OCI-LY7 (cell line): ENCODE measurements at regions of chr10 and their contacts with region 1.

Region 1: DNA sequence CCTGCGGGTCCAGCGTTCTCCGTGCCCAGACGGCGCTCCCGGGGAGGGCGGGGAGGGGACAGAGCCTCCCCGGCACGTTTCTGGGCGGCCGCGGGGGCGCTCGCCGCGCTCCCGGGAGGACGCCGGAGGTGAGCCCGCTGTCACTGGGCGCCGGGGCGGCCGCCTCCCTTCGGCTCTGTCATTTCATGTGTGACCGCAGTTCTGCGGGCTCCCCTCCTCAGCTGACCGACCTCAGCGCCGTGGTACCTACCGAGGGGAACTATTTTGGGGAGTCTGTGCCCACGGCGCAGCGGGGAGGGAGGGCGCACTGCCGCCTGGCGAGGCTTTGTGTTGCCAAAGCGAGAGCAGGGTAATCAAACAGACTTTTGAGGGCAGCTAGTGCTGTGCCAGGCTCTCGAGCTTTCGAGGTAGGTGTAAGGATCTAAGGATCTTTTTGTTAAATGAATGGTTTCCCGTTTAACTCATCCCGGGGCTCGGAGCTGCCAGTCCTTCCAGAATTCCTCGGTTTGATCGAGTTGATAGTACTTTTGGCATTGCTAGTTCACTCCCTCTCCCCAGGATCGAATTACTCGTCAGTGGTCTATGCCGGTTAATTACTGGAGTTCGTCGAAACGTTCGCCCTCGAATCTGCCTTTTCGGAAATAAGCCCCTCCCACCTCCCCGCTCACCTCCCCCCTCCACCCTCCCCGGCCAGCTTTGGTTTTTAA is 1.9 kb downstream of the ARID5B start:
- DNase-seq: peak; percentile 77
- H3K4me3 ChIP-seq: peak overlapping the region; percentile 93
- H3K27ac ChIP-seq: peak overlapping the region; percentile 96
- H3K4me1 ChIP-seq: peaks cover 50% of the 10 kb centered on the region
- CTCF ChIP-seq: peak; percentile 59

Region 2: GRCh38 chr10:61390851-61391250 is 512.5 kb before region 1 on chr10:
- CTCF ChIA-PET with region 1: no interaction called
- POLR2A ChIA-PET with region 1: no interaction called
- intact Hi-C with region 1: no loop called
- DNase-seq: no peak
- H3K4me3 ChIP-seq: no peak overlapping the region
- H3K27ac ChIP-seq: no peak overlapping the region
- H3K4me1 ChIP-seq: no peaks in the 10 kb centered on the region
- CTCF ChIP-seq: no peak

Region 3: DNA sequence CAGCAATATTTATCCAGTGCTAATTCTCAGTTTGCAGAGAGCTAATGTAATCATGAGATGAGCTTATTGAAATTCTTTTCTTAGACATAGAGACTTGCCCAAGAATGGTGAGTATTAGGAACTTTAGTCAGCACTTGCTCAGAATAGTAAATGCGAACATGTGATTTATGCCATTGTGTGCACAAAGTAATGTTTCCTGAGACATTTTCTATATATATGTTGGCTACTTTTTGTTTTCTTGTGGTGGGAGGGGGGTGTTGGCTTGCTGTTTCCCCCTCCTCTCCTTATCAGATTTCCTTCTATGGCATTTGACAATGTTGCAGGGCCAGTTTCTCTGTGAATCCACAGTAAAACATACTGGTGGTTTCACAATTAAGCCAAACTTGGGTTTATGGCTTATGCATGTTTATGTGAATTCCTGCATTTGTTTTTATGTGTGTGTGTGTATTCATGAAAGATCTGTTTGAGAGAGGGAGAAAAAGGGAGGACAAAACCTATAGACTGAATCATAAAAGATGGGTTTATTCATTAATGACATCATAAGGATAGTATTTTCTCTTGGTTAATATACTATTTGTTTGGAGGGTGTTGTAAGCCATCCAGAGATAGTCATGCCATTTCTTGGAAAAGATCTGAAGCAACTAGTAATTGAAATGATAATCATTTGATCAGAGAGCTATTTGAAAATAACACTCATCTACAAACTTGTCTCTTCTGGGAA is 34.4 kb after region 1 on chr10:
- CTCF ChIA-PET with region 1: interaction called, 3 read pairs
- POLR2A ChIA-PET with region 1: interaction called, 38 read pairs
- intact Hi-C with region 1: no loop called
- DNase-seq: no peak
- H3K4me3 ChIP-seq: no peak overlapping the region
- H3K27ac ChIP-seq: no peak overlapping the region
- H3K4me1 ChIP-seq: peaks cover 70% of the 10 kb centered on the region
- CTCF ChIP-seq: no peak

Region 4: DNA sequence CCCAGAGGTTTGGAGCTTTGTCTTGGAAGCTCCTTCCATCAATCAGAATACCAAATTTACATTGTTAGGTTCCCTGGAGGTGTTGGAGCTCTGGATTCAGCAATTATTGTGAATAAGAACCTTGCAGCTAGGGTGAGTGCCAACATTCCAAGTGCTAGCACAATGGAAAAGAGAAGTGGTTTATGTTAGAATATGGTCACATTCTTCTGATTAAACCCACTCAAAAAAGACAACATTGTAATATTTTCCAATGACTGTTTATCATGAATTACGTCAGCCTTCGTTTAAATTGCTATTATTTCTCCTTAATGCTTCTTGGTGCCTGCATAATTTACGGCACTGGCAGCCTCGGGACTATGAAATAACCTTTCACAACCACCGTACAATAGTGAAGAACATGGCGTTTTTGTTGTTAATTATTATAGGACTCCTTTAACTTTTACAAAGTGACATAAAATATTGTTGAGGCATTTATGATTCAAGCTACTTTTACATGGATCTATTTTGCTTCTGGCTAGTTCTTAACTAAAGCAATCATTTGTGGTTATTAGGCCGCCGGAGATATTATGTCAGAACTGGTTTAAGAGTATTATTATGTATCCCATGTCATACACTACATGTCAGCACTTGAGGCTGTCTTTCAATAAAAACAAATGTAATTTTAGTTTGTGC is 115.8 kb after region 1 on chr10:
- CTCF ChIA-PET with region 1: no interaction called
- POLR2A ChIA-PET with region 1: interaction called, 15 read pairs
- intact Hi-C with region 1: no loop called
- DNase-seq: no peak
- H3K4me3 ChIP-seq: peak overlapping the region; percentile 21
- H3K27ac ChIP-seq: peak overlapping the region; percentile 43
- H3K4me1 ChIP-seq: peaks cover 76% of the 10 kb centered on the region
- CTCF ChIP-seq: no peak

Region 5: GRCh38 chr10:62109587-62110293 is 206.4 kb after region 1 on chr10:
- CTCF ChIA-PET with region 1: interaction called, 3 read pairs
- POLR2A ChIA-PET with region 1: interaction called, 15 read pairs
- intact Hi-C with region 1: loop called (anchors 5 kb)
- DNase-seq: peak; percentile 89
- H3K4me3 ChIP-seq: peak overlapping the region; percentile 46
- H3K27ac ChIP-seq: peak overlapping the region; percentile 90
- H3K4me1 ChIP-seq: peaks cover 59% of the 10 kb centered on the region
- CTCF ChIP-seq: no peak

Region 6: DNA sequence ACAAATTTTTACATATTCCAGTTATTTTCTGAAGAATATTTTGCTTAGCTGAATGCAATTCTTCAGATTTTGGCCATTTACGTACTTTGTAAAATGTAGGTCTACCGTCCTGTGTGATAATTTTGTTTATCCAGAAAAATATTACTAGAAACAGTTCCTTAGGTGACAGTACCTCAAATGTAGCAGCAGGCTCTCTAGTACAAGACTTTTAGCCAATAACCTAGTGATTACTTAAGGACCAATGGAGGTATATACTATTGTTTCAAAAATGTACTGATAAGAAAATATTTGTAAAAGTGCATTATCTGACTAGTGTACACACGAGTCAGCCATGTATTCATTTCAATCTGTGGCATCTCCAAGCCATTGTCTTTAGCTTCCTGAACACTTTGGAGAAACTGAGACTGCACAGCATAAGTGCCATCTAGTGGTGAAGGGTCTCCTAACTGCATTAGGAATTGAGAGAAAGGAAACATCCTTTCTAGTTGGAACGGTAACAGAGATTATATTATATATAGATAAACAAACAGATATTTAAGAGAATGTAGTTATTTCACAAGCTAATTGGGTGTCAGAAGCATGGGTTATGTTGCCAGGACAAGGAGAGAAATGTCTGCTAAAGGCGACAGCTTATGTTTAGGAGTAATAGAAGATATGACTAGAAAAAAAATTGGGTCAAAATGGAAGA is 341.6 kb after region 1 on chr10:
- CTCF ChIA-PET with region 1: no interaction called
- POLR2A ChIA-PET with region 1: interaction called, 9 read pairs
- intact Hi-C with region 1: loop called (anchors 1 kb)
- DNase-seq: peak; percentile 86
- H3K4me3 ChIP-seq: no peak overlapping the region
- H3K27ac ChIP-seq: peak overlapping the region; percentile 67
- H3K4me1 ChIP-seq: peaks cover 26% of the 10 kb centered on the region
- CTCF ChIP-seq: peak; percentile 99

Region 7: GRCh38 chr10:62528441-62528840 is 625.1 kb after region 1 on chr10:
- CTCF ChIA-PET with region 1: no interaction called
- POLR2A ChIA-PET with region 1: interaction called, 4 read pairs
- intact Hi-C with region 1: loop called (anchors 5 kb)
- DNase-seq: peak; percentile 90
- H3K4me3 ChIP-seq: peak overlapping the region; percentile 51
- H3K27ac ChIP-seq: peak overlapping the region; percentile 96
- H3K4me1 ChIP-seq: peaks cover 56% of the 10 kb centered on the region
- CTCF ChIP-seq: no peak